RWPE1 (cell line): ENCODE measurements at regions of chr11 and their contacts with region 1.

Region 1: GRCh38 chr11:67213178-67213621 is 53.1 kb upstream of the GRK2 start:
- DNase-seq: no peak
- H3K27ac ChIP-seq: no peak overlapping the region
- CTCF ChIP-seq: no peak

Region 2: GRCh38 chr11:67045341-67045764 is 167.8 kb before region 1 on chr11:
- CTCF ChIA-PET with region 1: no interaction called
- POLR2A ChIA-PET with region 1: no interaction called
- DNase-seq: peak; percentile 88
- H3K27ac ChIP-seq: peak overlapping the region; percentile 51
- CTCF ChIP-seq: no peak

Region 3: GRCh38 chr11:67202045-67202444 is 11.2 kb before region 1 on chr11:
- CTCF ChIA-PET with region 1: interaction called, 4 read pairs
- POLR2A ChIA-PET with region 1: interaction called, 11 read pairs
- DNase-seq: no peak
- H3K27ac ChIP-seq: no peak overlapping the region
- CTCF ChIP-seq: no peak